CD4-positive, alpha-beta memory T cell (primary cell): ENCODE measurements at regions of chr7 and their contacts with region 1.

Region 1: GRCh38 chr7:151519765-151520418 is at the start of gene RHEB:
- DNase-seq: peak; percentile 98
- H3K4me3 ChIP-seq: peak within 1 kb of the TSS; percentile 58 to 82
- H3K4me3 Mint-ChIP-seq: peak within 1 kb of the TSS; percentile 92 to 100 (median 95)
- H3K27ac ChIP-seq: peak within 1 kb of the TSS; percentile 80
- H3K27ac Mint-ChIP-seq: peak within 1 kb of the TSS; percentile 97 to 100 (median 99)
- H3K4me1 ChIP-seq: peaks cover 44% of the 10 kb centered on the region
- H3K4me1 Mint-ChIP-seq: peaks cover 28 to 46% (median 38%) of the 10 kb centered on the region in 4 donors
- H3K27me3 ChIP-seq: no peaks in the 10 kb centered on the region
- H3K27me3 Mint-ChIP-seq: peaks cover 0 to 1% of the 10 kb centered on the region in 2 donors
- total RNA-seq, gene RHEB: 40.8 to 45.1 TPM

Region 2: DNA sequence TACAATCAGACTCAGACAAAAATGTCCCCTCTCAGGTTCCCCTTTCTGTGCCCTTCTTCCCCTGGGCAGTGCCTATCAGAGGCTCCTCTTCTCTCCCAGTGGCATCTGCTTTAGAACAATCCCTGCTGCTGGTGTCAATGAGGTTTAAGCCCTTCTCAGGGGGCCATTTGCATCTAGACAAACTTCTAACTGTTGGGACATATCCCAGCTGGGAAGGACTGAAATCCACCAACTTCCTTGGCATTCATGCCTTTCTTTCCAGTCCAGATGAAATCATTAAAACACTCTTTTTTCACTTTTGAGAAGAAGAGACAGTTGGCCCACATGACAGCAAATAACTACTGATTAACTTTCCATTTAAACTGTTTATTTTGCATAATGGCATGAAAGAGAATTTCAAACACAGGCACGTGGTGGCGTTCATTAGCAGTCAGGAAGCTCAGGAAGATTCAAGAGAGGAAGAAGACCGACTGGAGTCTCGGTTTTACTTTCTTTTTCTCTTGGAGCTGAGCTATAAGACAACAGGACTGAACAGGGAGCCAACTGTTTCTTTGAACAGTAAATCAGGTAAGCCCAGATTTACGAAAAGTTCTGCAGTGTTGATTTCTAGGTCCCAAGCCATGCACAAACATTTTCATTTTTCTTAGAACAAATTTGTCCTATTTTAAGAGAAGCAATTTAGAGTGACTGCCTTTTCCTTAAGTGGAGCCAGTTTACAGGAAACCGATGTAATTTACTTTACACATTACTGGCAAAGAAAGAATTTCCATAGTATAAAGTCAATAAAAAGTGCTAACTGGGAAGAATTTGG is 834.5 kb before region 1 on chr7 and contains the start of gene GIMAP2:
- CTCF ChIA-PET with region 1: no interaction called
- POLR2A ChIA-PET with region 1: no interaction called
- intact Hi-C with region 1: no loop called
- DNase-seq: peak; percentile 64 to 69 (median 65)
- H3K4me3 ChIP-seq: peak within 1 kb of the TSS; percentile 80 to 97
- H3K4me3 Mint-ChIP-seq: peak within 1 kb of the TSS; percentile 94 to 99 (median 98)
- H3K27ac ChIP-seq: peak within 1 kb of the TSS; percentile 90
- H3K27ac Mint-ChIP-seq: peak within 1 kb of the TSS; percentile 90 to 99 (median 97)
- H3K4me1 ChIP-seq: peaks cover 60% of the 10 kb centered on the region
- H3K4me1 Mint-ChIP-seq: peaks cover 55 to 97% (median 74%) of the 10 kb centered on the region in 4 donors
- H3K27me3 ChIP-seq: no peaks in the 10 kb centered on the region
- H3K27me3 Mint-ChIP-seq: no peaks in the 10 kb centered on the region
- total RNA-seq, gene GIMAP2: 238 to 244 TPM

Region 3: DNA sequence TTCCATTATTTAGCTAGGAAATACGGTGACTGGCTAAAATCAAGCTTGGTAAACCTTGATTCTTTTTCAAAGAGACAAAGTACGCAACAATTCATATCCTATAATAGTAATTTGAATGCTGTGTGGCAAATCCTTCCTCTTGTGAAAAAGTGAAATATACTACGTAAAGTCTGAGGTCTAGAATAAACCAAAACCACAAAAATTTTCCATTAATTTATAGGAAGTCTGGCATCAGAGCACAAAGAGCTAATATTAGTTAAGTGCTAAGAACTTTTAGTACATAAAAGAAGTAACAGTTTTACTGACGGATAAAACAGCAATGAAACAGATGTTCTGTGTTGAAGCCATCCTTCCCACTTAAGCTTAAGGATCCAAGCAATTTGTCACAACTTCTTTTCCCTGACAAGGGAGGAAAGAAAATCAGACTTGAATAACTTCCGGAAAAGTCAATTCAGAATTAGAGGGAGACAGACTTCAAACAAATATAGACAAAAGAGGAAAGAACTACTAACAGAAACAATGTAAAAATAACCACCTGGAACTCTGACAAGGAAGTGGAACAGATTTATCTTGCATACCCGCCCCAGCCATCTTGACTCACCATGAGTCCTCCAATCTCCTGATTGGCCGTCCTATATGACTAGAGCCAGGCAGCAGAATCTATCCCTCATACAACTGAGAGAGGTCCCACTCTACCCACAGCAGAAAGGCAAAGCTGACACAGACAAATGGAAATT is 34.8 kb before region 1 on chr7:
- CTCF ChIA-PET with region 1: no interaction called
- POLR2A ChIA-PET with region 1: interaction called, 3 read pairs
- intact Hi-C with region 1: loop called (anchors 5 kb)
- DNase-seq: no peak
- H3K4me3 ChIP-seq: no peak overlapping the region
- H3K4me3 Mint-ChIP-seq: no peak overlapping the region
- H3K27ac ChIP-seq: no peak overlapping the region
- H3K27ac Mint-ChIP-seq: peak overlapping the region in 1 of 7 donors; percentile 72
- H3K4me1 ChIP-seq: peaks cover 8% of the 10 kb centered on the region
- H3K4me1 Mint-ChIP-seq: peaks cover 14 to 35% (median 26%) of the 10 kb centered on the region in 4 donors
- H3K27me3 ChIP-seq: no peaks in the 10 kb centered on the region
- H3K27me3 Mint-ChIP-seq: no peaks in the 10 kb centered on the region

Region 4: GRCh38 chr7:151631968-151632749 is 112.3 kb after region 1 on chr7:
- CTCF ChIA-PET with region 1: interaction called, 4 read pairs
- POLR2A ChIA-PET with region 1: interaction called, 45 read pairs
- intact Hi-C with region 1: loop called (anchors 1 kb)
- DNase-seq: peak; percentile 84 to 91 (median 88)
- H3K4me3 ChIP-seq: peak overlapping the region; percentile 73 to 83
- H3K4me3 Mint-ChIP-seq: peak overlapping the region; percentile 89 to 99 (median 96)
- H3K27ac ChIP-seq: peak overlapping the region; percentile 78
- H3K27ac Mint-ChIP-seq: peak overlapping the region; percentile 94 to 99 (median 97)
- H3K4me1 ChIP-seq: peaks cover 18% of the 10 kb centered on the region
- H3K4me1 Mint-ChIP-seq: peaks cover 18 to 38% (median 21%) of the 10 kb centered on the region in 4 donors
- H3K27me3 ChIP-seq: no peaks in the 10 kb centered on the region
- H3K27me3 Mint-ChIP-seq: no peaks in the 10 kb centered on the region

Region 5: DNA sequence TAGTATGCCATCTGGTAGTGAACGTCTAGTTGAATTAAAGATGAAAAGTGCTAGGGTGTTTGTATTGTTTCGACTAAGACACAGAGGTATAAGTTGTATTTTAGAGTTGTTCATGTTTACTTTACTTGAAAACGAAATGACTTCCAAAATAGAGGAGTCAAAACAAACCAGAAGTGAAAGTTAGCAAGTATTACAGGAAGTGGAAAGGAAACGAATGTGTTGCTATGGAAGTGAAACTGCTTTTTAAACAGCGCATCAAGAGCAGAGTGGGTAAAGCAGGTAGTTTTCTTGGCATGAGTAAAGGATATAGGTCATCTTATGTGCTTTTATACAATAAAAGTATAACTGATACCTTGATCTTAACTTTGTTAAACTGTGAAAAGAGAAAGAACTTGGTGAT is 416.3 kb after region 1 on chr7:
- CTCF ChIA-PET with region 1: no interaction called
- POLR2A ChIA-PET with region 1: no interaction called
- intact Hi-C with region 1: loop called (anchors 2 kb)
- DNase-seq: peak in 4 of 5 donors; percentile 60 to 76 (median 68)
- H3K4me3 ChIP-seq: peak overlapping the region in 1 of 2 donors; percentile 8
- H3K4me3 Mint-ChIP-seq: peak overlapping the region; percentile 78 to 94 (median 87)
- H3K27ac ChIP-seq: peak overlapping the region; percentile 54
- H3K27ac Mint-ChIP-seq: peak overlapping the region; percentile 85 to 99 (median 98)
- H3K4me1 ChIP-seq: peaks cover 15% of the 10 kb centered on the region
- H3K4me1 Mint-ChIP-seq: peaks cover 16 to 23% (median 21%) of the 10 kb centered on the region in 4 donors
- H3K27me3 ChIP-seq: no peaks in the 10 kb centered on the region
- H3K27me3 Mint-ChIP-seq: no peaks in the 10 kb centered on the region

Region 6: DNA sequence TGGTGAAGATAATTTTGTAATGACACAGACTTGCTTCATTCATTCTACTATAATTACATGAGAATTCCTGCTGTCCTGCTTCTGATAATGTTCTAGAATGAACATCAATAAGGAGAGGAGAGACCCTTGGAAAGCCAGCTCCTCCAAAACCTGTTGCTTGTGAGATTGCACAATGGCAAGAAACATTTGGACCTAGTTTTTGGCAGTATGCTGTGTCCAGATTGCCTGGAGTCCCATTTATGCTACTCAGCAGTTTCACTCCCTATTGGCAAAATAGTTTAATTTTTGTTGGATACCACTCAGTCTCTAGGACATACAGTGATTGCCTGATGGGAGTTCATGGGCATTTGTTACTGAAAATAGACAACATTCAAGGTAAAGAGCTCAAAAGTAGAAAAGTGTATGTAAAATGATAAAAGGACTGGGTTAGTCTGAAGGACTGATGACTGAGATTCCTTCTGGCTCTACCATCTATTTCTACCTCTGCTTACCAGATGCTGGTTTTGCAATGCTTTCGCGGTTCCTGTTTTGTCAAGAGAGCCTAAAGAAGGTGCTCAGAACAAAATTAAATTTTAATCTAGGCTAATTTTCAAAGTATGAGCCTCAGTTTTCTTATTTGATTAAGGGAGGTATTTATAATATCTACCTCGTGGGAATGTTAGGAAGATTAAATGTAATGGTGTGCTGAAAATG is 1231.7 kb after region 1 on chr7:
- CTCF ChIA-PET with region 1: no interaction called
- POLR2A ChIA-PET with region 1: no interaction called
- intact Hi-C with region 1: no loop called
- DNase-seq: no peak
- H3K4me3 ChIP-seq: no peak overlapping the region
- H3K4me3 Mint-ChIP-seq: no peak overlapping the region
- H3K27ac ChIP-seq: no peak overlapping the region
- H3K27ac Mint-ChIP-seq: no peak overlapping the region
- H3K4me1 ChIP-seq: no peaks in the 10 kb centered on the region
- H3K4me1 Mint-ChIP-seq: no peaks in the 10 kb centered on the region
- H3K27me3 ChIP-seq: no peaks in the 10 kb centered on the region
- H3K27me3 Mint-ChIP-seq: peaks cover 0 to 2% of the 10 kb centered on the region in 2 donors